SK-N-SH (cell line): ENCODE measurements at regions of chr17 and their contacts with region 1.

Region 1: DNA sequence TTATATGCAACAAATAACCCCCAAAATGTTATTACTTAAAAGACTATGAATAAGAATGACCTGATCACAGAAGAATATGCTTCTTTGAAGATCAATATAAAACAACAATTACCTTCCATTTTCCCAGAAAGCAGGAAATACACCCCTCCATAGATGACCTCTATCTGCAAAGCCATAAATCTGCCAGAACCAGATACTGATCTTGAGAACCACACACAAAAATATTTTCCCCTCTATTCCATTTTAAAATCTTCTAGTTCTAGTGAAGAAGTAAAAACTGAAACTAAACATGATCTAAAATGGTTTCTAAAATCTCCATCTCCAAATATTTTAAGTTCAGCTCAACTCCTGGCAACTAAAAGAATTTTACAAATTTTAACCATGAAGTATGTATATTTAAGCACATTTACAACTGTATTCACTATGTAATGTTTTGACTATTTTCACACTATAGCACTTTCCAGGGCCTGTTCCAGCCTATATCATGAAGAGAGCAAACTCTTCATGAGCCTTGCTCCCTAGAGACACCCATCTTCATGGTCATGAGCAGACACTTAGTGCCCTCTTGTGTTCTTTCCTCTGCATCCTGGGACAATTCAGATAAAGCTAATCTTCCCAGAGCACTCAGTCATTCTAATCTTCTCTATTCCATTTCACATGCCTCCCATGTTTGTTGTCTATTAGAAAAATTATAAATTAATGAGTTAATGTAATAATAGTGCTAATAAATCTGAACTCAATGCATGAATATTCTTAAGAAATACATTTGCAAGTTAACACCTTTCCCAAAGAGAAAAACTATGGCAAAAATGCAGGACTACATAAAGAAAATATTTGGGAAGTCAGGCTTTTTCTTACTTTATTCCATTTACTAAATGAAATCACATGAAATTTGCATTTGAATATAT is 87.0 kb downstream of the HELZ start:
- DNase-seq: peak; percentile 75
- H3K4me3 ChIP-seq: no peak overlapping the region
- H3K27ac ChIP-seq: peak overlapping the region; percentile 47 to 97; a peak in 3 of 4 replicates
- H3K4me1 ChIP-seq: peaks cover 5 to 34% of the 10 kb centered on the region in 2 experiments; a peak in 3 of 4 replicates
- H3K27me3 ChIP-seq: no peaks in the 10 kb centered on the region
- CTCF ChIP-seq: peak; percentile 76
- EP300 ChIP-seq: peak in 1 of 2 experiments; percentile 18; a peak in 1 of 4 replicates
- RAD21 ChIP-seq: peak; percentile 100

Region 2: GRCh38 chr17:66900126-66901010 is 257.6 kb before region 1 on chr17:
- CTCF ChIA-PET with region 1: interaction called, 27 read pairs
- POLR2A ChIA-PET with region 1: no interaction called
- DNase-seq: peak; percentile 60
- H3K4me3 ChIP-seq: no peak overlapping the region
- H3K27ac ChIP-seq: no peak overlapping the region
- H3K4me1 ChIP-seq: peaks cover 8 to 12% of the 10 kb centered on the region in 2 experiments; a peak in 3 of 4 replicates
- H3K27me3 ChIP-seq: peaks cover 2% of the 10 kb centered on the region; the same call in 1 of the 2 replicates
- CTCF ChIP-seq: peak; percentile 74
- EP300 ChIP-seq: no peak
- RAD21 ChIP-seq: peak; percentile 76

Region 3: DNA sequence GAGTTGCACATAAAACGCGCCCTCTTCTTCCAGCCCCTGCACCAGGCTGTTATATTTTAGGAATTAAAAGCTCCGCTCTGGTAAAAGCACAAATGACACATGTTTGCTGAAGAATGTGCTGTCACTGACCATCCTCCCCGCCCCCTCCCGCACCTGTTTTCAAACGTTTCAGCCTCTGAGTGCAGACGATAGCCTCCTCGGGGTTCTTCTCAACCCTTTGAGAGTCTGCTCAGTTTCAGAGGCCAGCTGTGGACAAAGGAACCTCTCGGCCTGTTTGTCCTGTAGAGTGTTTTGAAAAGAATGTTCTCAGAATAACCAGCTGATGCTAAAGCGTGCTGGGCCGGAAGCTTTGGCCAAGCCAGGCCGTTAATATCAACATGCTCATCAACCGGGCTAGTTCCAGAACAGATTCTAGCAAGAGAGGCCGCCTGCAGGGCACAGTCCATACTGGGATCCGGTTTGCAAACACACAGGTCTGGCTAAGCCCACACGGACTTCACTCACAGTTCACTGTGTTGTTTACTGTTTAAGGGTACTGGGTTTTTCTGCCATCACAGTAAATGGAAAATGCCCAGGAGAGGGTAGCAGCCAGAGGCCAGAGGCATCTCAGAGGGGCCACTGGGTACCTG is 199.9 kb before region 1 on chr17:
- CTCF ChIA-PET with region 1: interaction called, 10 read pairs
- POLR2A ChIA-PET with region 1: no interaction called
- DNase-seq: peak; percentile 66
- H3K4me3 ChIP-seq: no peak overlapping the region
- H3K27ac ChIP-seq: peak overlapping the region in 1 of 2 experiments; percentile 76; a peak in 2 of 4 replicates
- H3K4me1 ChIP-seq: peaks cover 7 to 59% of the 10 kb centered on the region in 2 experiments
- H3K27me3 ChIP-seq: no peaks in the 10 kb centered on the region
- CTCF ChIP-seq: no peak
- EP300 ChIP-seq: no peak
- RAD21 ChIP-seq: no peak; the same call in 1 of the 2 replicates

Region 4: DNA sequence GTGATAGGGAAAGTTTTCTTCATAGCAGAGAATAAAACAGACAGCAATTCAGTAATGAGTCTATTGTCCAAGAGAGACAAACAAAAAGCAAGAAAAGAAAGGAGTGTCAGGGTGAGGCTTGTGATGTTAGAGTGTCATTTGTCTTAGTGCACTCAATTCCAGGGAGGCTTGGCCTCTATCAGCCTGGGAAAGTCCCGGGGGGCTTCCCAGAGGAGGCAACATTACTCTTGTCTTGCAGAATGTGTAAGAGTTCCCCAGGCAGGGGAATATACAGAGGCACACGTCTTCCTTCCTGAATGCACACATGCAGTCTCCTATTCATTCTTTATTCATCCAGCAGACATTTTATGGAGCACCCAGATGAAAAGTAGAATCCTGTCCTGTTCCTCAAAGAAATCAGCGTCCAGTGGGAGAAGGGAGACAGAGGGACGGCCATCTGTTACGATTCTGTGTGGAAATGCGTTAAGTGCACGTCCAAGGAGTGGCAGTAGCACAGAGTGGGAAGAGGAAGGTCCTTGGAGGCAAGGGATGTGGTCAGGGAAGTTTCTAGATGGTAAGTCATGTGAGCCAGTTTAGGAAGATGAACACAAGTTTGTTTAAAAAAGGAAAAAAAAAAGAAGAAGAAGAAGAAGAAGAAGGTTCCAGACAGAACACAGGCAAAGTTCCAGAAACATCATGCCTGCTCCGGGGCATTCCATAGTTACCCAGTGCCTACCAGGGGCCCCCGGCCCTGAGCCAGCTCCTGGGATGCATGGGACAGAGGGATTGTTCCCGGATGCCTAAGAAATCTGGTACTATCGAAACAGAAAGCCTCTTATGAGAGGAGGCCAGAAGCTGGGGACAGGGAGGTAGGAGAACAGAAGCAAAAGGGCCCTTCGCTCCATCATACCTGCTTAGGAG is 172.4 kb before region 1 on chr17:
- CTCF ChIA-PET with region 1: interaction called, 25 read pairs
- POLR2A ChIA-PET with region 1: no interaction called
- DNase-seq: no peak
- H3K4me3 ChIP-seq: no peak overlapping the region
- H3K27ac ChIP-seq: peak overlapping the region in 1 of 2 experiments; percentile 98; a peak in 2 of 4 replicates
- H3K4me1 ChIP-seq: peaks cover 0 to 71% of the 10 kb centered on the region in 2 experiments; a peak in 2 of 4 replicates
- H3K27me3 ChIP-seq: no peaks in the 10 kb centered on the region
- CTCF ChIP-seq: no peak
- EP300 ChIP-seq: no peak; a peak in 1 of 4 replicates
- RAD21 ChIP-seq: no peak

Region 5: GRCh38 chr17:67076290-67076689 is 81.7 kb before region 1 on chr17:
- CTCF ChIA-PET with region 1: interaction called, 11 read pairs
- POLR2A ChIA-PET with region 1: no interaction called
- DNase-seq: no peak
- H3K4me3 ChIP-seq: no peak overlapping the region
- H3K27ac ChIP-seq: no peak overlapping the region
- H3K4me1 ChIP-seq: peaks cover 0 to 5% of the 10 kb centered on the region in 2 experiments; a peak in 2 of 4 replicates
- H3K27me3 ChIP-seq: no peaks in the 10 kb centered on the region
- CTCF ChIP-seq: no peak
- EP300 ChIP-seq: no peak
- RAD21 ChIP-seq: no peak

Region 6: DNA sequence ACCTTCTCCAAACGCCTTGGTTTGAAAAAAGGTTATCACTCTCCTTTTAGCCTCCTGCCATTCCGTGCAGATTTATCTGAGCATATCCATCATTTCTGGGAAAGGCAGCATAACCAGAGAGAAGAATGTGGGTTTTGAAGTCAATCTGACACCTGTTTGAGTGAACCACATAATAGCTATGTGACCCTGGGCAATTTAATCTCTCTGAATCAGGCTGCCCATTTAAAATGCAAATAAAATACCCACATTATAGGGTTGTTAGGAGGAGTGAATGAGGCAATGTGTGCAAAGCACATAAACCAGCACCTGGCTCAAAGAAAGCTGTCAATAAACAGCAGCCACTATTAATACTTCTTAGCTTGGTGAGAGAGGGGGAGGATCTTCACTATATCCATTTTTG is 25.6 kb before region 1 on chr17:
- CTCF ChIA-PET with region 1: interaction called, 28 read pairs
- POLR2A ChIA-PET with region 1: no interaction called
- DNase-seq: no peak
- H3K4me3 ChIP-seq: no peak overlapping the region
- H3K27ac ChIP-seq: peak overlapping the region in 1 of 2 experiments; percentile 83; a peak in 2 of 4 replicates
- H3K4me1 ChIP-seq: peaks cover 4 to 17% of the 10 kb centered on the region in 2 experiments; a peak in 3 of 4 replicates
- H3K27me3 ChIP-seq: no peaks in the 10 kb centered on the region
- CTCF ChIP-seq: no peak
- EP300 ChIP-seq: no peak
- RAD21 ChIP-seq: no peak